HepG2 (cell line): ENCODE measurements at regions of chr10 and their contacts with region 1.

Region 1: GRCh38 chr10:64115913-64116643 is 594.9 kb downstream of the REEP3 start:
- DNase-seq: no peak
- ATAC-seq: peak; percentile 87
- H3K4me3 ChIP-seq: no peak overlapping the region
- H3K27ac ChIP-seq: no peak overlapping the region
- H3K4me1 ChIP-seq: peaks cover 27% of the 10 kb centered on the region
- H3K27me3 ChIP-seq: no peaks in the 10 kb centered on the region
- CTCF ChIP-seq: peak; percentile 51
- EP300 ChIP-seq: no peak
- POLR2A ChIP-seq: no peak
- RAD21 ChIP-seq: no peak

Region 2: DNA sequence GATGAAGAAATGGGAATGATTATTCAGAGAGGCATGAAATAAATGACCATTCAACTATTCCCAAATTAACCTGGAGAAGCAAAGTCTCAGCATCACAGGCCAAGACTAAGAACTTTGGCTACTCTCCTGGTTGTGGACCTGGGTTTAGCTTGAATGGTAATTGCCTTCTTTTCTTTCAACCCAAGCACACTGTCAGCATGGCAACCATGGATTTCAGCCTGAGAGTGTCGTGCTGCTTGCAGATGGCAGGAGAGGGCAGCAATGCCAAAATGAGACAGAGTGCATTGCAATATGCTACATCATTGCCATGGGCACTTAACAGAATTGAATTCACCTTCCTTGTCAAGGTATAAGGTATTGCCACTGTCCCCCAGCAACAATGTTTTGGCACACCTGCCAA is 172.3 kb after region 1 on chr10:
- CTCF ChIA-PET with region 1: no interaction called
- POLR2A ChIA-PET with region 1: no interaction called
- in situ Hi-C with region 1: no loop called
- intact Hi-C with region 1: loop called (anchors 1 kb)
- DNase-seq: no peak
- ATAC-seq: no peak
- H3K4me3 ChIP-seq: no peak overlapping the region
- H3K27ac ChIP-seq: no peak overlapping the region
- H3K4me1 ChIP-seq: no peaks in the 10 kb centered on the region
- H3K27me3 ChIP-seq: no peaks in the 10 kb centered on the region
- CTCF ChIP-seq: no peak
- EP300 ChIP-seq: no peak
- POLR2A ChIP-seq: no peak
- RAD21 ChIP-seq: no peak

Region 3: DNA sequence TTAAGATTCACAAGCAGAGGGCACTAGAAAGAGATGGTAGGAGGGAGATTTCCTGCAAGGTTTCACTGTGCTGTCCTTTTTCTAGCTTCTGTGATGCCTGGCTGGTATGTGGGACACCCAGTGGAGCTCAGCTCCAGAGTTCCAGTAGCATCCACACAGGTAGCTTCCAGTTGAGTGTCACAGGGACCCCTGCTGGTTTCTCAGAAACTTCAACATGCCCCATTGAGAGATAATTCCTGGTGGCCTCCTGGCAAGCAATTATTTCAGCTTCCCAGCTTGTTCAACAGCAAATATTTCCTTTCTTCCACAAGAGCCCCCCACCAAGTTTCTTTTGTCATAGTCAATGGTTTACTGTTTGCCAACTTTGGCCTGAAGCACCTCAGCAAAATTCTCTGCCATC is 263.8 kb after region 1 on chr10:
- CTCF ChIA-PET with region 1: no interaction called
- POLR2A ChIA-PET with region 1: no interaction called
- in situ Hi-C with region 1: no loop called
- intact Hi-C with region 1: loop called (anchors 2 kb)
- DNase-seq: peak; percentile 27
- ATAC-seq: peak; percentile 97
- H3K4me3 ChIP-seq: no peak overlapping the region
- H3K27ac ChIP-seq: no peak overlapping the region
- H3K4me1 ChIP-seq: no peaks in the 10 kb centered on the region
- H3K27me3 ChIP-seq: no peaks in the 10 kb centered on the region
- CTCF ChIP-seq: peak; percentile 51
- EP300 ChIP-seq: no peak
- POLR2A ChIP-seq: no peak
- RAD21 ChIP-seq: peak; percentile 49; the same call in 1 of the 2 replicates

Region 4: DNA sequence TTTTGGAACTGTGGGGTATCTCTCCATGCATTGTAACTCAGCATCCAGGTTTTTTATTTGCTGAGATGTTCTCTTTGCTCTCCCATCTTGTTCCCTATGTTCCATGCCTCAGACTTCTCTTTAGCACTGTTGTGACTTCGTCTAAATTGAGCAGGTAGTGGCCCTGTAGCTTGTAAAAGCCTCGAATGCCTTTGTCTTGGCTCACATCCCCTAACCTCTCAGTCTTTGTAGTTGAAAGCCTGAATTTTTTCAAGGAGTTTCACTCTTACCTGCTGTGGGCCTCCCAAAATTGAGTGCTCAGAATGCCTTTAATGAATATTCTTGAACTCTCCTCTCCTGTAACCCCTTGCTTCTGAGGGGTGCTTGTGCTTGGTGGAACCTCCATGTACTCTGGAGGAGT is 542.5 kb after region 1 on chr10:
- CTCF ChIA-PET with region 1: no interaction called
- POLR2A ChIA-PET with region 1: no interaction called
- in situ Hi-C with region 1: no loop called
- intact Hi-C with region 1: no loop called
- DNase-seq: no peak
- ATAC-seq: no peak
- H3K4me3 ChIP-seq: no peak overlapping the region
- H3K27ac ChIP-seq: no peak overlapping the region
- H3K4me1 ChIP-seq: no peaks in the 10 kb centered on the region
- H3K27me3 ChIP-seq: no peaks in the 10 kb centered on the region
- CTCF ChIP-seq: no peak
- EP300 ChIP-seq: no peak
- POLR2A ChIP-seq: no peak
- RAD21 ChIP-seq: no peak